ENCODE measurements at regions of chr1 and their contacts with region 1.

Region 1: DNA sequence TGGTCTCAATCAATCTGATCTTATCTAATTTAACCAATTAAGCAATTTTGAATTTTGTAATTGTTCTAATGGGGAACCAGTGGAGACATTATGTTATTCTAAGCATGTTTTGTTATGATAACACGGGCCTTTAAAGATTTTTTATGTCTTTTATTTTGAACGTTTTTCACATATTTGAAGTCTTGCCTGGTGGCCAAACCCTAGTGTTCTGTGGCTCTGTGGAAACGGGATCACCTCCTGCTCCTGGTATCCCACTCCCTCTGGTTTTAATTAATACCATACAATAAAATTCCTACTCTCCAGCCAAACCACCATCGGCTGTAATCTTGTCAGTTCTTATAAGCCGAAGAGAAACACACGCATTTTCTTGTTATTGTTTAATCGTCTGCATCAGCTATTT is 22.9 kb upstream of the LMO4 start:
- DNase-seq: peak; percentile 8
- H3K4me3 ChIP-seq: no peak overlapping the region
- H3K27ac ChIP-seq: no peak overlapping the region
- H3K4me1 ChIP-seq: no peaks in the 10 kb centered on the region
- H3K27me3 ChIP-seq: no peaks in the 10 kb centered on the region
- CTCF ChIP-seq: no peak
- EP300 ChIP-seq: no peak
- POLR2A ChIP-seq: no peak

Region 2: GRCh38 chr1:87120779-87121178 is 185.0 kb before region 1 on chr1:
- intact Hi-C with region 1: no loop called
- DNase-seq: no peak
- H3K4me3 ChIP-seq: no peak overlapping the region
- H3K27ac ChIP-seq: no peak overlapping the region
- H3K4me1 ChIP-seq: no peaks in the 10 kb centered on the region
- H3K27me3 ChIP-seq: no peaks in the 10 kb centered on the region
- CTCF ChIP-seq: no peak
- EP300 ChIP-seq: no peak
- POLR2A ChIP-seq: no peak

Region 3: GRCh38 chr1:87508247-87508787 is 202.6 kb after region 1 on chr1:
- intact Hi-C with region 1: no loop called
- DNase-seq: no peak
- H3K4me3 ChIP-seq: no peak overlapping the region
- H3K27ac ChIP-seq: no peak overlapping the region
- H3K4me1 ChIP-seq: peaks cover 0 to 5% (median 0%) of the 10 kb centered on the region in 4 donors
- H3K27me3 ChIP-seq: no peaks in the 10 kb centered on the region
- CTCF ChIP-seq: no peak
- EP300 ChIP-seq: no peak
- POLR2A ChIP-seq: no peak

Region 4: GRCh38 chr1:88061492-88062177 is 755.9 kb after region 1 on chr1:
- intact Hi-C with region 1: loop called (anchors 10 kb)
- DNase-seq: no peak
- H3K4me3 ChIP-seq: no peak overlapping the region
- H3K27ac ChIP-seq: no peak overlapping the region
- H3K4me1 ChIP-seq: peaks cover 0 to 14% (median 11%) of the 10 kb centered on the region in 4 donors
- H3K27me3 ChIP-seq: no peaks in the 10 kb centered on the region
- CTCF ChIP-seq: peak; percentile 58 to 78 (median 66)
- EP300 ChIP-seq: no peak
- POLR2A ChIP-seq: no peak